Naive thymus-derived CD8-positive, alpha-beta T cell (primary cell): ENCODE measurements at regions of chr6 and their contacts with region 1.

Region 1: DNA sequence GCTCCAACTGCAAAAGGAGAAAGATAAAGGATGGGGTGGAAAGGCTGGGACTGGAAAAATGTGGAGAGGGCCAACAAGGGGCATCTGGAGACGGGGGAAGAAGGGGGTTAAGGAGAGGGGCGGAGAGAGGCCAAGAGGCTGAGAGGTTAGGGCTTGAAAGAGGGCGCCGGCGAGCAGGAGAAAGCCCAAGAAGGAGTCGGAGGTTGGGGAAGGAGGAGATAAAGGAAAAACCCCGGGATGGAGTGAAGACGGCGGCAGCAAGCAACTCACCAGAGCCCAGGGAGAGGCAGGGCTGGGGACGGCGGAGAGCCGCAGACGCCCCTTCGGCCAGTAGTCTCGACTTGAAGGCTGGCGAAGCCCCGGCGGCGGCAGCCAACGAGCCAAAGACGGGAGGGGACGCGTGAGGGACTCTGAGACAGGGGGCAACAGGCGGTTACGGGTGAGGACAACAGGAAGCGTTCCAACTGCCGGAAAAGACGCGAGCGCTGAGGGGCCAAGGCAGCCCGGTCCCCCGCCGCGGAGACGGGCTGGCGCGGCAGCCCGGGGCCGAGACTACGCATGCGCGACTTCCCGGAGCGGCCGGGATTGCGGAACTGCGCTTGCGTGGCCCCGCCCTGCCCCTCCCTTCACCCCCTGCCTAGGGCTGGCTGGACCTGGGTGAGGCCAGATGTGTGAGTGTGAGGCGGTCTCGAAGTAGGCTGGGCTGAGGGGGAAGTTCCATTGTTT is at the start of gene STK38:
- DNase-seq: peak; percentile 82 to 95 (median 90)
- ATAC-seq: peak; percentile 69 to 78
- H3K4me3 Mint-ChIP-seq: peak within 1 kb of the TSS; percentile 93 to 100 (median 99)
- H3K27ac Mint-ChIP-seq: peak within 1 kb of the TSS; percentile 96 to 99 (median 98)
- H3K4me1 Mint-ChIP-seq: peaks cover 12 to 54% (median 41%) of the 10 kb centered on the region in 4 donors
- H3K27me3 Mint-ChIP-seq: no peaks in the 10 kb centered on the region
- polyA plus RNA-seq, gene STK38: 46.4 to 79.6 (median 52.8) TPM

Region 2: DNA sequence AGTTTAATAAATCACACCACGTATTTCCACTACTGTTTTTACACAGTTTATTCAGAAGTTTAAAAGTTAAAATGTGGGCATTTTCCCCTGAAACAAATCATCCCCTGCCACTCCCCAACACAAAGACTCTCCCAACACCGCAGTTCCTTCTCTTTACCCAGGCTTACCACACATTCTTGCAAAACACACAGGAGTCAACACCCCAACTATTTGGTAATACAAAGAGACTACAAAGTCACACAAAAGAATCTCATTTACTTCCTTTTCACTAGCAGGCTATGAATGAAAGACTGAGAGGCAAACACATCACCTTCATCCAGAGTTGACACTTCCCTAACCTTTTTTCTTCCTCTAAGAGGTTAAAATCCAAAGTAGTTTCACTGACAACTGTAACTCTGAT is 53.2 kb before region 1 on chr6:
- POLR2A ChIA-PET with region 1: no interaction called
- DNase-seq: no peak
- ATAC-seq: no peak
- H3K4me3 Mint-ChIP-seq: peak overlapping the region in 2 of 10 donors; percentile 11 to 15
- H3K27ac Mint-ChIP-seq: peak overlapping the region; percentile 38 to 92 (median 74)
- H3K4me1 Mint-ChIP-seq: peaks cover 16 to 38% (median 35%) of the 10 kb centered on the region in 4 donors
- H3K27me3 Mint-ChIP-seq: no peaks in the 10 kb centered on the region

Region 3: GRCh38 chr6:36533321-36533720 is 13.8 kb before region 1 on chr6:
- POLR2A ChIA-PET with region 1: interaction called, 20 read pairs
- DNase-seq: no peak
- ATAC-seq: no peak
- H3K4me3 Mint-ChIP-seq: peak overlapping the region in 6 of 10 donors; percentile 24 to 52 (median 39)
- H3K27ac Mint-ChIP-seq: peak overlapping the region in 8 of 10 donors; percentile 27 to 82 (median 60)
- H3K4me1 Mint-ChIP-seq: peaks cover 22 to 83% (median 77%) of the 10 kb centered on the region in 4 donors
- H3K27me3 Mint-ChIP-seq: no peaks in the 10 kb centered on the region

Region 4: DNA sequence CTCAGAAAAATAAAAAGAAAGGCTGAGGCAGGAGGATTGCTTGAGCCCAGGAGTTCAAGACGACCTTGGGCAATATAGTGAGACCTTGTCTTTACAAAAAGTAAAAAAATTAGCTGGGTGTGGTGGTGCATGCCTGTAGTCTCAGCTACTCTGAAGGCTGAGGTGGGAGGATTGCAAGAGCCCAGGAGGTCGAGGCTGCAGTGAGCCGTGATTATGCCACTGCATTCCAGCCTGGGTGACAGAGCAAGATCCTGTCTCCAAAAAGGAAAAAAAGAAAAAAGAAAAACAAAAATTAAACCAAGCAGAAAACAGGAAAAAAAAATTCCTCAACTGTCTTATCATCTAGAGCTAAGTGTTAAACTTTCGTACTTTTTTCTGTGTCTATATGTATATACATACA is 34.6 kb after region 1 on chr6:
- POLR2A ChIA-PET with region 1: interaction called, 10 read pairs
- DNase-seq: no peak
- ATAC-seq: no peak
- H3K4me3 Mint-ChIP-seq: no peak overlapping the region
- H3K27ac Mint-ChIP-seq: no peak overlapping the region
- H3K4me1 Mint-ChIP-seq: peaks cover 0 to 9% (median 7%) of the 10 kb centered on the region in 4 donors
- H3K27me3 Mint-ChIP-seq: no peaks in the 10 kb centered on the region

Region 5: GRCh38 chr6:36615018-36615761 is 68.1 kb after region 1 on chr6:
- POLR2A ChIA-PET with region 1: interaction called, 10 read pairs
- DNase-seq: peak in 8 of 10 donors; percentile 14 to 70 (median 42)
- ATAC-seq: peak; percentile 52 to 73
- H3K4me3 Mint-ChIP-seq: no peak overlapping the region
- H3K27ac Mint-ChIP-seq: peak overlapping the region in 8 of 10 donors; percentile 18 to 76 (median 70)
- H3K4me1 Mint-ChIP-seq: peaks cover 9 to 30% (median 25%) of the 10 kb centered on the region in 4 donors
- H3K27me3 Mint-ChIP-seq: no peaks in the 10 kb centered on the region

Region 6: DNA sequence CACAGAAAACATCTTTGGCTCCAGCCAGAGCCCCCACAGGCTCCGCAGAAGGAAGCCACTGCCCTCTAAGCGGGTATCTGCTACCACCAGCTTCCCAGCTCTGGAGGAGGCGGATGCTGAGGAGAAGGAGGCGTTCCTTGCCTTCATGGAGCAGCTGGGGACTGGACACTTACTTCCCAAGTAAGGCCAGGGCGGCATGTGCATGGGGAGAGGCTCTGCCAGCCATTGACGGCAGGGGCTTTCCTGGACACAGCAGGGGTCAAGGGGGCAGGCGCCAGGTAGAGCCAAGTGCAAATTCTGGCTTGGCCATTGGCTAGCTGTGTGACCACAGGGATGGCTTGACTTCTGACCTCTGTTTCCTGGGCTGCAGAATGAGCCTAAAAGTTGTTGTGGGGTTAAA is 168.4 kb after region 1 on chr6:
- POLR2A ChIA-PET with region 1: no interaction called
- DNase-seq: no peak
- ATAC-seq: no peak
- H3K4me3 Mint-ChIP-seq: no peak overlapping the region
- H3K27ac Mint-ChIP-seq: no peak overlapping the region
- H3K4me1 Mint-ChIP-seq: peaks cover 0 to 4% (median 1%) of the 10 kb centered on the region in 4 donors
- H3K27me3 Mint-ChIP-seq: peaks cover 0 to 3% (median 0%) of the 10 kb centered on the region in 5 donors